Mammary epithelial cell (primary cell): ENCODE measurements at regions of chr16 and their contacts with region 1.

Region 1: GRCh38 chr16:56269811-56270684 is 78.8 kb downstream of the GNAO1 start:
- DNase-seq: no peak
- H3K4me3 ChIP-seq: no peak overlapping the region
- H3K27ac ChIP-seq: no peak overlapping the region
- H3K4me1 ChIP-seq: no peaks in the 10 kb centered on the region
- H3K27me3 ChIP-seq: peaks cover 4% of the 10 kb centered on the region
- CTCF ChIP-seq: no peak

Region 2: GRCh38 chr16:56038564-56039098 is 231.4 kb before region 1 on chr16:
- CTCF ChIA-PET with region 1: no interaction called
- dilution Hi-C with region 1: no loop called
- in situ Hi-C with region 1: no loop called
- intact Hi-C with region 1: no loop called
- DNase-seq: no peak
- H3K4me3 ChIP-seq: no peak overlapping the region
- H3K27ac ChIP-seq: no peak overlapping the region
- H3K4me1 ChIP-seq: no peaks in the 10 kb centered on the region
- H3K27me3 ChIP-seq: no peaks in the 10 kb centered on the region
- CTCF ChIP-seq: no peak

Region 3: DNA sequence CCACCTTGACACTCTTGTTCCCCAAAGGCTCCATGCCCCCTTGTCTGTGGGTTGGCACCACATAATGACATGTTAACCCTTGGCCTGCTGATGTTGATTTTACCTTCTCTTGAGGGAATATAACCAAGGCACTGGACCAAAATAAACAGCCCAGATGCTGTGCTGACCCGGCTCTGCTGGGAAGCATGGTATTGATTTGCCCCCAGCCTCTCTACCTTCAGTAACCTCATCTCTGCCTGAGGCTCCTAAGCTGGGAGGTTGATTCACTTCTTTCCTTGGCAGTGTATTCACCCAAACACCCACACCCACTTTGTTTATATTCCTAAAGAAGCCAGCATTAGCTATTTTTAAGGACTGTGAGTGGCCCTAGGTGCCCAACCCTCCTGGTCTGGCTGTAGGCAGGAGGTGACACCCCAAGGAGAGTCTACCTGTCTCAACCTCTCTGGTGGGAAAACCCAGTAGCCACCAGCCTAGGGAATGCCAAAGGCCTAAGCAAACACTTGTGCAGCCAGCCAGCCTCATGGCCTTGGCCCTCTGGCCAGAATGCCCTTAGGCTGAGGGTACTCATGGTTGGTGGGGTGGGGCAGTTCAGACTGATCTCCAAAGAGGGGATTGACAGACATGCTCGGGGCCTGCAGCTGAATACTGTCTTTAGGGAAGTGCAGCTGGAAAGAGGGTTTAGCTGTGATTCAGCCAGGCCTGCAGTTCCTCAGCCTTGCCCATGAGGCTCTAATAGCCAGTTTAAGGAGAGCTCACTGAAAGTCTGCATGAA is 36.1 kb before region 1 on chr16:
- CTCF ChIA-PET with region 1: no interaction called
- dilution Hi-C with region 1: loop called (anchors 5 kb)
- in situ Hi-C with region 1: no loop called
- intact Hi-C with region 1: no loop called
- DNase-seq: no peak
- H3K4me3 ChIP-seq: no peak overlapping the region
- H3K27ac ChIP-seq: no peak overlapping the region
- H3K4me1 ChIP-seq: no peaks in the 10 kb centered on the region
- H3K27me3 ChIP-seq: peaks cover 3% of the 10 kb centered on the region
- CTCF ChIP-seq: no peak